IMR-90 (cell line): ENCODE measurements at regions of chr6 and their contacts with region 1.

Region 1: DNA sequence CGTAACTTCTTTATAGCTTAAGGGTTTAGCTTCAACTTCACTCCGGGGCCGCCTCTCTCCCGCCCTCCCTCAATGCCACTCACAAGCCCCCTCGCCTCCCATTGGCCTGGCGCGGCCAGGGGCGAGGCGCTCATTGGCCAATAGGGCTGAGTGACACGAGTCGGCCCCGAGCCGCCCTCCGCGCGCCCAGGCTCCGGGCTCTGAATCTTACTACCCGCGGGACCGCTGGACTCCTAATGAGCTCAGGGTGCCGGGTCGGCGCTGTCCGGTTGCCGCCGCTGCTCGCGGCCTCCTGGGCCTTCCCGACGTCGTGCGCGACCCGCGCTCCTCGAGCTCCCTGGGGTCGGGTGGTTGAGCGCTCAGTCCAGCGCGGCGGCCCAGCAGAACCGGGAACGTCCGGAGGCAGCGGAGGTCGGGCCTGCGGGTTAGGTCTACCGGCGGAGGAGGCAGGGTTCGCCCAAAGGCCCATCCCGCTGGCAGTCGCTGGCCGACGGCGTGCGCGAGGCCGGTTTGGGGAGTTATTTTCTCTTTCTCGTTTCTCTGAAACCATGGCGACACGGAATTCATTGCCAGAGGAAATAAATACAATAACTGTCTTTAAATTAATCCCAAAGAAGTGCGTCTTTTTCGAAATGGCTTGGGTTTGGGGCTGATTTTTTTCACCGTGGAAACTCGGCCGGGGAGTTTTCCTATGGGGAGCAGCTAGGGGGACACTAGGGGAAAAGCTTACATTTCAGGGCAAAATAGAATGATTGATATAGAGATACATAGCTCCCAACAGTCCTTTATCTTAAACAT is at the start of gene SIM1:
- DNase-seq: peak; percentile 59
- ATAC-seq: peak; percentile 92
- H3K4me3 ChIP-seq: peak within 1 kb of the TSS; percentile 41
- H3K27ac ChIP-seq: no peak within 1 kb of the TSS
- H3K4me1 ChIP-seq: peaks cover 5% of the 10 kb centered on the region; the same call in 1 of the 2 replicates
- H3K27me3 ChIP-seq: peaks cover 95% of the 10 kb centered on the region
- CTCF ChIP-seq: no peak
- POLR2A ChIP-seq: no peak
- RAD21 ChIP-seq: no peak
- total RNA-seq, gene SIM1: not detected in 2 replicates

Region 2: DNA sequence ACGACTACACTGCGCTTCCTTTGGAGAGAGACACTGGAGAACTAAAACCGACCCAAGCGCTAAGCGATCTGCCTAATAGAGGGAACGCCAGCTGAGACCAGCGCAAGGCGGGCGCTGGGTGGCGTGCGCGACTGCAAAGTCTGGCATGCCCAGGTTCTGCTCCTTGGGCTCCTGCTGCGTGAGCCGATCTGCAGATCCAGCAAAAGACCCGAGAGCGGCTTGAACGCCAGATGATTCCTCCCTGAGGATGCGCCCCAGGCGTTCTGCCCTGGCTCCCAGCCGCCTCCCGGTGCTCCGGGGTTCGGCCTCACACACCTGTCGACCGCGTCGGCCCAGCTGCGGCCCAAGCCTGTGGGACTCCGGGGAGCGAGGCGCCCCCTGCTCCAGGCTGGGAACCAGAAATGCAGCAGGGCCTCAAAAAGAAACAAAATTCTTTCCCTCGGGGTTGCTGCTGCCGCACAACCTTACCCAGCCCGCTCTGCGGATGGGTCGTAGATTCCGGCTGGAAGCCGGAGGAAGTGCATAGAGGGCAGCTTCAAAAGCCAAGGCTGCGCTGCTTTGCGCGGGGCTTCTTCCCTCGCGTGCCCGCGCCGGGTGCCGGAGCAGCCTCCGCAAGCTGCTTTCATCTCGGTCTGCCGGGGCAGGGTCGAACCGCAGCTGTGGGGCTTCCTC is 876.3 kb before region 1 on chr6:
- CTCF ChIA-PET with region 1: no interaction called
- POLR2A ChIA-PET with region 1: no interaction called
- dilution Hi-C with region 1: no loop called
- in situ Hi-C with region 1: loop called (anchors 25 kb)
- intact Hi-C with region 1: no loop called
- DNase-seq: peak; percentile 59
- ATAC-seq: peak; percentile 90
- H3K4me3 ChIP-seq: peak overlapping the region; percentile 30
- H3K27ac ChIP-seq: no peak overlapping the region
- H3K4me1 ChIP-seq: no peaks in the 10 kb centered on the region
- H3K27me3 ChIP-seq: peaks cover 72% of the 10 kb centered on the region
- CTCF ChIP-seq: peak; percentile 47
- POLR2A ChIP-seq: no peak
- RAD21 ChIP-seq: peak; percentile 47

Region 3: GRCh38 chr6:100573167-100573566 is 108.1 kb after region 1 on chr6:
- CTCF ChIA-PET with region 1: no interaction called
- POLR2A ChIA-PET with region 1: no interaction called
- dilution Hi-C with region 1: no loop called
- in situ Hi-C with region 1: no loop called
- intact Hi-C with region 1: no loop called
- DNase-seq: peak; percentile 65
- ATAC-seq: no peak
- H3K4me3 ChIP-seq: no peak overlapping the region
- H3K27ac ChIP-seq: no peak overlapping the region
- H3K4me1 ChIP-seq: no peaks in the 10 kb centered on the region
- H3K27me3 ChIP-seq: no peaks in the 10 kb centered on the region
- CTCF ChIP-seq: peak; percentile 54
- POLR2A ChIP-seq: no peak
- RAD21 ChIP-seq: peak; percentile 41